ENCODE measurements at regions of chr5 and their contacts with region 1.

Region 1: GRCh38 chr5:154072414-154073171 is 33.8 kb downstream of the MFAP3 start:
- DNase-seq: peak; percentile 77
- H3K4me3 Mint-ChIP-seq: peak overlapping the region; percentile 28
- H3K27ac Mint-ChIP-seq: peak overlapping the region; percentile 16
- H3K4me1 Mint-ChIP-seq: peaks cover 56% of the 10 kb centered on the region
- H3K27me3 Mint-ChIP-seq: no peaks in the 10 kb centered on the region

Region 2: GRCh38 chr5:153974131-153974812 is 98.3 kb before region 1 on chr5:
- intact Hi-C with region 1: loop called (anchors 1 kb)
- DNase-seq: no peak
- H3K4me3 Mint-ChIP-seq: no peak overlapping the region
- H3K27ac Mint-ChIP-seq: no peak overlapping the region
- H3K4me1 Mint-ChIP-seq: no peaks in the 10 kb centered on the region
- H3K27me3 Mint-ChIP-seq: peaks cover 15% of the 10 kb centered on the region

Region 3: GRCh38 chr5:154179846-154180710 is 107.5 kb after region 1 on chr5:
- intact Hi-C with region 1: loop called (anchors 1 kb)
- DNase-seq: peak; percentile 25
- H3K4me3 Mint-ChIP-seq: no peak overlapping the region
- H3K27ac Mint-ChIP-seq: no peak overlapping the region
- H3K4me1 Mint-ChIP-seq: peaks cover 38% of the 10 kb centered on the region
- H3K27me3 Mint-ChIP-seq: peaks cover 8% of the 10 kb centered on the region

Region 4: DNA sequence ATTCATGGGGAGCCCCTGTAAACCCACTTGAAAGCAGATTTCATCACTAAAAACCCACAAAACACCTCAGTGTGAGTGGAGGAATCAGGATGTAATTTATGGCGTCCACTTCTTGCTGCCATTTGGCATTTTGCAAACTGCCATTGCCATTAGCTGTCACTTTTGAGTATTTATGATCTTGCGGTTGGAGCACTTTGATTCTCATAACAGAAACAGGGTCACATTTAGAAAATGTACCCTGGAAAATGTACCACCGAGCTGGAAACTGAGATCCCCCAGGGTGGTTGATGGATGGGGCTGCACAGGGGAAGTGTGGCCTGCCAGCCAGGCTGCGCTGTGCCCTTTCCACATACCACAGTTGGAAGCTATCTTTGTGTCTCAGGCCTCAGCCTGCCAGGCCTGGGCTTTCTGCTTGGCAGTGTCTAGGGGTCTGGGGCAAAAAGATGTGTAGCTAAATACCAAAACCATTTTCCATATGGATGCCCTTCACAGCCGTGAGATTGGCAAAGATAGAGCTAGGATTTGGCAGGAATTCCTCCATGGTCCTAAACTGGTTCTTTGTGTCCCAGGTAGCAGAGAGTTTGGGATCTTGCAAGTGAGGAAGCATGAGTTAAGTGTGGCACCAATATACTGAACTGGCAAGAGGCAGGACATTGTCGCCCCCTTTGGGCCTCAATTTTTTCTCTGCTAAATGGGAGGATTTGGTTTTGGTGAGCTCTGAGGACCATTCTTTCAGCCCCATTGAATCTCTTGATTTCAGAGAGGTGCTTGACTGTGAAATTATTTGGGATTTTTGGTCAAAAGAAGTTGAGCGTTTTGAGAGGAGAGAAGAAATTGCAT is 164.2 kb after region 1 on chr5:
- intact Hi-C with region 1: loop called (anchors 1 kb)
- DNase-seq: no peak
- H3K4me3 Mint-ChIP-seq: no peak overlapping the region
- H3K27ac Mint-ChIP-seq: peak overlapping the region; percentile 50
- H3K4me1 Mint-ChIP-seq: peaks cover 69% of the 10 kb centered on the region
- H3K27me3 Mint-ChIP-seq: no peaks in the 10 kb centered on the region

Region 5: GRCh38 chr5:154405078-154405792 is 332.6 kb after region 1 on chr5:
- intact Hi-C with region 1: loop called (anchors 1 kb)
- DNase-seq: peak; percentile 50
- H3K4me3 Mint-ChIP-seq: peak overlapping the region; percentile 26
- H3K27ac Mint-ChIP-seq: peak overlapping the region; percentile 40
- H3K4me1 Mint-ChIP-seq: peaks cover 7% of the 10 kb centered on the region
- H3K27me3 Mint-ChIP-seq: no peaks in the 10 kb centered on the region

Region 6: DNA sequence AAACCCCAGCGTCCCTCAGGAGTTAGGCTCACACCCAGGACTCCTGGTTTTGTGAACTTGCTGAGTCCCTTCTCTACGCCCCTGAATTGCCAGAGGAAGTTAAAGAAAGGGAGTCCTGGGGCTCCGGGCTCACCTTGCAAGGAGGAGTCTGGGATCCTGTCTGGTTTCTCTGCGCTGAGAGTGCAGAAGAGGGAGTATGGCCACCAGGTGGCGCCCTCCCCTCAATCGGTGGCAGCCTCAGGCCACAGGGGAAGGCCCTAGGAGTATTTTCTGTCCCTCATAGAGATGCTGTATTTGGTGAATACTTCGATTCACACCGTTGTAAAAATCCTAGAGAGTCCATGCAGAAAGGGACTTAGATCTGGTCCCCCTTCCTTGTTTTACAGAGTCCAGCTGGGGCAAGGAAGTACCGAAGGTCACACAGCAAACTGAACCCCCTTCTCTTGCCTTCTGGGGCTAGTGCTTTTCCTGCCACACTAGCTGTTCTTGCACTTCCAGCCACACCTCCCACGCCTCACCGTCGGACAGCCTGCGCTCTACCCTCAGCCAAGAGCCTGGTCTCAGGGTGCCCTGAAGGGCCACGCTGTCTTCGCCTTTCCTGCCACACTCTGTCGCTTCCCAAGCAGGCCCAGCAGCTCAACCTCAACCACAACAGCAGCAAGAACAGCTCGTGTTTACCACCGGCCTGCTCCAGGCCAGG is 395.2 kb after region 1 on chr5:
- intact Hi-C with region 1: loop called (anchors 1 kb)
- DNase-seq: peak; percentile 54
- H3K4me3 Mint-ChIP-seq: no peak overlapping the region
- H3K27ac Mint-ChIP-seq: peak overlapping the region; percentile 48
- H3K4me1 Mint-ChIP-seq: no peaks in the 10 kb centered on the region
- H3K27me3 Mint-ChIP-seq: peaks cover 49% of the 10 kb centered on the region